ENCODE measurements at regions of chr12 and their contacts with region 1.

Region 1: DNA sequence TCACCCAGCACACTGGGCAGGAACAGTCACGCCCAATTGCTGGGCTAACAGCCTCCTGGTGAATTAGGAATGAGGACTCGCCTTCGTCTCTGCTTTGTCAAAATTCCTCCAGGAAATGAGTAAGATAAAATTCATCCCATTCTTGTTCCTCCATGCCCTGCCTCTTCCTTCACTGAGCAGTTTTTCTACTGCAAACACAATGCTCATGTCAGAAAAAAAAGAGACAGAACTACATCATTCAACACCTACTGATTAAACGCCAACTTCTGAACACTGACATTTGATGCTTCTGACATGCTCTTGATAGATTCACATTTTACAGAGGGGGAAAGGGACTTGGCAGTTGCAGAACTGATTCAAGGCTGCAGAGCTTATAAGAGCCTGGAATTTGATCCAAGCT is 37.5 kb upstream of the DTX1 start:
- DNase-seq: peak; percentile 39
- H3K4me3 Mint-ChIP-seq: no peak overlapping the region
- H3K27ac Mint-ChIP-seq: no peak overlapping the region
- H3K4me1 Mint-ChIP-seq: peaks cover 17% of the 10 kb centered on the region
- H3K27me3 Mint-ChIP-seq: no peaks in the 10 kb centered on the region
- CTCF ChIP-seq: no peak

Region 2: GRCh38 chr12:113073586-113073985 is 54.5 kb after region 1 on chr12:
- CTCF ChIA-PET with region 1: interaction called, 10 read pairs
- POLR2A ChIA-PET with region 1: no interaction called
- intact Hi-C with region 1: no loop called
- DNase-seq: no peak
- H3K4me3 Mint-ChIP-seq: no peak overlapping the region
- H3K27ac Mint-ChIP-seq: no peak overlapping the region
- H3K4me1 Mint-ChIP-seq: peaks cover 6% of the 10 kb centered on the region
- H3K27me3 Mint-ChIP-seq: peaks cover 24% of the 10 kb centered on the region
- CTCF ChIP-seq: no peak

Region 3: GRCh38 chr12:113271853-113272561 is 253.0 kb after region 1 on chr12:
- CTCF ChIA-PET with region 1: no interaction called
- POLR2A ChIA-PET with region 1: no interaction called
- intact Hi-C with region 1: no loop called
- DNase-seq: peak; percentile 68
- H3K4me3 Mint-ChIP-seq: no peak overlapping the region
- H3K27ac Mint-ChIP-seq: peak overlapping the region; percentile 67
- H3K4me1 Mint-ChIP-seq: peaks cover 16% of the 10 kb centered on the region
- H3K27me3 Mint-ChIP-seq: no peaks in the 10 kb centered on the region
- CTCF ChIP-seq: no peak

Measured in MCF 10A (cell line).